ENCODE measurements at regions of chr1 and their contacts with region 1.

Region 1: DNA sequence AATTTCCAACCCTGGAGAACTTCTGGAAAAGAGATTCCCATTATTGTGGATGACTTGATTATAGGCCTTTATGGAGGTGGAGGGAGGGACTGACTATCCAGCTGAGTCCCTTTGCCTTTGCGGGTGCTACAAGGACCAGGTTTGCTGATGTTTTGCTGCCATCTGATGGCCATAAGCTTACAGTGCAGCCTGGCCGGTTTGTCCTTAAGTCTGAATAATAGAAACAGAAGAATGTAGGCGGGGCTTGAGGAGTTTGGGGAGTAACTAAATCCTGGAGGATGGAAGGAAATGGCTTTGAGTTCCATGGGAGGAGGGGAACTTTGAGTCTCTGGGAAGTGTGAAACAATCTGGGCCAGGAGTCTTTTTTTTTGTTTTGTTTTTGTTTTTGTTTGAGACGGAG is 55.7 kb upstream of the CD1D start:
- DNase-seq: peak; percentile 87 to 93 (median 90)
- H3K4me3 ChIP-seq: no peak overlapping the region
- H3K27ac ChIP-seq: no peak overlapping the region
- H3K4me1 ChIP-seq: peaks cover 0 to 6% (median 4%) of the 10 kb centered on the region in 4 experiments
- H3K27me3 ChIP-seq: peaks cover 0 to 11% (median 4%) of the 10 kb centered on the region in 5 experiments

Region 2: DNA sequence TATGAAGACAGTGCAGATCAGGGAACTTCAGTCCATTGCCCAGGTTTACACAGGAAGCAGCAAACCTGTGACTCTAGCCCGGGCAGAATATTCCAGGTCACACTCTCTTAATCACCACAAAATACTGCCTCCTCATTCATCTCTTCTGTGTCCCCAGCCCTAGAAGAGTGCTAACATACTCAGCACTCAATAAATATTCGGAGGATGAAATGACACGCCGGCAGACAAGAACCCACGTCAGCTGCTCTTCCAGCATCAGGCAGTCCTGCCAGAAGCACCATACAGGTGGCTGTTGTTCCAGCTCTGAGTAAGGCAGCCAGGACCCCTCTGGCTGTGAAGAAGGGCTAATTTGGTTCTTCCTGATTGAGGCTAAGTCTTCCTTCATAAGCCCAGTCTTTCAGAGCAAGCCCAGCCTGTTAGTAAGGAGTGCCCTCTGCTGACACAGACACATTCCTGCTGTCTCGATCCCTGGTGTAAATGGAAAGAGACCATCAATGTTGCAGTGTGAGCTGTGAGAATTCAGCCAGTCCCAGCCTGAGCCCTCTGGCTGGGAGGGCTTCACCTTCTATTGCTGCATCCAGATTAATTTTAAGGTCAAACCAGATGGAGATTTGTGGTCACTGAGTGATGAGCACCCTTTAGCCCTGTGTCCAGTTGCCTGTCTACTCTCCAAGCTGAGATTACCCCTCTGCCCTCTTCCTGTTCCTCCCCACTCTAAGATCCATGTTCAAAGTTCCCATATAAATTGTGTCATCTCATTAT is 176.5 kb before region 1 on chr1:
- CTCF ChIA-PET with region 1: no interaction called
- POLR2A ChIA-PET with region 1: no interaction called
- DNase-seq: peak; percentile 68 to 83 (median 80)
- H3K4me3 ChIP-seq: no peak overlapping the region
- H3K27ac ChIP-seq: no peak overlapping the region
- H3K4me1 ChIP-seq: peaks cover 2 to 11% (median 6%) of the 10 kb centered on the region in 4 experiments
- H3K27me3 ChIP-seq: no peaks in the 10 kb centered on the region

Region 3: DNA sequence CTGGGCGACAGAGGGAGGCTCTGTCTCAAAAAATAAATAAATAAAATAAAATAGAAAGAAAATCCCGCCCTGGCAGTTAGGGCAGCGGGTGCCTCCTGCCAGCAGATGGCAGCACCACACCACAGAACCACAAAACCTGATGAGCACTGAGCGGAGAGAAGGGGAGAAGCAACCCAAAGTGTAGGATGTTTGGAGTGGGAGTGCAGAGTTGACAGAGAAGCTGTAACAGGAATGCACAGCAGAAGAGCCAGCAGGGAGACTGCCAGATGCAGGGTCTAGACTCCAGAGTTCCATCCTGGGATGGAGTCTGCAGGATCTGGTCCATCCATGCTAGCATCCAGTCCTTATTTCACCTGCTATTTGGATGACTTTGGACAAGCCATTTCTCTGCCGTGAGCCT is 161.3 kb before region 1 on chr1:
- CTCF ChIA-PET with region 1: interaction called, 418 read pairs
- POLR2A ChIA-PET with region 1: no interaction called
- DNase-seq: peak; percentile 50 to 76 (median 64)
- H3K4me3 ChIP-seq: no peak overlapping the region
- H3K27ac ChIP-seq: no peak overlapping the region
- H3K4me1 ChIP-seq: peaks cover 0 to 5% (median 2%) of the 10 kb centered on the region in 4 experiments
- H3K27me3 ChIP-seq: peaks cover 0 to 3% (median 0%) of the 10 kb centered on the region in 5 experiments

Region 4: GRCh38 chr1:157984469-157984868 is 140.5 kb before region 1 on chr1:
- CTCF ChIA-PET with region 1: interaction called, 174 read pairs
- POLR2A ChIA-PET with region 1: no interaction called
- DNase-seq: no peak
- H3K4me3 ChIP-seq: no peak overlapping the region
- H3K27ac ChIP-seq: no peak overlapping the region
- H3K4me1 ChIP-seq: no peaks in the 10 kb centered on the region
- H3K27me3 ChIP-seq: peaks cover 0 to 10% (median 0%) of the 10 kb centered on the region in 5 experiments

Region 5: GRCh38 chr1:158055854-158056253 is 69.1 kb before region 1 on chr1:
- CTCF ChIA-PET with region 1: no interaction called
- POLR2A ChIA-PET with region 1: no interaction called
- DNase-seq: peak; percentile 63 to 98 (median 95)
- H3K4me3 ChIP-seq: peak overlapping the region in 2 of 7 experiments; percentile 5 to 18
- H3K27ac ChIP-seq: no peak overlapping the region
- H3K4me1 ChIP-seq: peaks cover 0 to 31% (median 30%) of the 10 kb centered on the region in 4 experiments
- H3K27me3 ChIP-seq: no peaks in the 10 kb centered on the region